MCF 10A (cell line): ENCODE measurements at regions of chr12 and their contacts with region 1.

Region 1: GRCh38 chr12:87428701-87429277 is 600.4 kb downstream of the C12orf50 start:
- DNase-seq: peak; percentile 45
- H3K4me3 Mint-ChIP-seq: no peak overlapping the region
- H3K27ac Mint-ChIP-seq: peak overlapping the region; percentile 88
- H3K4me1 Mint-ChIP-seq: peaks cover 18% of the 10 kb centered on the region
- H3K27me3 Mint-ChIP-seq: no peaks in the 10 kb centered on the region
- CTCF ChIP-seq: no peak

Region 2: DNA sequence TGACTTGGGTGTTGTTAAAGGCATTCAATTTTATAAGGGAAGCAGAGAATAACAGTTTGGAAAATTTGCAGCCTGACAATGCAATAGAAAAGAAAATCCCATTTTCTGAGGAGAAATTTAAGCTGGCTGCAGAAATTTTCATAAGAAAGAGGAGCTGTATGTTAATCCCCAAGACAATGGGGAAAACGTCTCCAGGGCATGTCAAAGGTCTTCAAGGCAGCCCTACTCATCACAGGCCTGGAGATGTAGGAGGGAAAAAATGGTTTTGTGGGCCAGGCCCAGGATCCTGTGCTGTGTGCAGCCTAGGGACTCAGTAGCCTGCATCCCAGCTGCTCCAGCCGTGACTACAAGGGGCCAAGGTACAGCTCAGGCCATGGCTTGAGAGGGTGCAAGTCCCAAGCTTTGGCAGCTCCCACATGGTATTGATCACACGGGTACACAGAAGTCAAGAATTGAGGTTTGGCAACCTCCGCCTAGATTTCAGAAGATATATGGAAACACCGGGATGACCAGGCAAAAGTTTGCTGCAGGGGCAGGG is 246.0 kb before region 1 on chr12:
- CTCF ChIA-PET with region 1: no interaction called
- POLR2A ChIA-PET with region 1: no interaction called
- intact Hi-C with region 1: no loop called
- DNase-seq: no peak
- H3K4me3 Mint-ChIP-seq: no peak overlapping the region
- H3K27ac Mint-ChIP-seq: no peak overlapping the region
- H3K4me1 Mint-ChIP-seq: no peaks in the 10 kb centered on the region
- H3K27me3 Mint-ChIP-seq: no peaks in the 10 kb centered on the region
- CTCF ChIP-seq: no peak

Region 3: GRCh38 chr12:87311206-87311605 is 117.6 kb before region 1 on chr12:
- CTCF ChIA-PET with region 1: no interaction called
- POLR2A ChIA-PET with region 1: no interaction called
- intact Hi-C with region 1: no loop called
- DNase-seq: no peak
- H3K4me3 Mint-ChIP-seq: no peak overlapping the region
- H3K27ac Mint-ChIP-seq: no peak overlapping the region
- H3K4me1 Mint-ChIP-seq: no peaks in the 10 kb centered on the region
- H3K27me3 Mint-ChIP-seq: no peaks in the 10 kb centered on the region
- CTCF ChIP-seq: no peak

Region 4: GRCh38 chr12:87439990-87440827 is 11.4 kb after region 1 on chr12:
- CTCF ChIA-PET with region 1: no interaction called
- POLR2A ChIA-PET with region 1: interaction called, 14 read pairs
- intact Hi-C with region 1: no loop called
- DNase-seq: peak; percentile 88
- H3K4me3 Mint-ChIP-seq: no peak overlapping the region
- H3K27ac Mint-ChIP-seq: peak overlapping the region; percentile 43
- H3K4me1 Mint-ChIP-seq: peaks cover 28% of the 10 kb centered on the region
- H3K27me3 Mint-ChIP-seq: no peaks in the 10 kb centered on the region
- CTCF ChIP-seq: no peak

Region 5: GRCh38 chr12:87848248-87848868 is 419.6 kb after region 1 on chr12:
- CTCF ChIA-PET with region 1: no interaction called
- POLR2A ChIA-PET with region 1: no interaction called
- intact Hi-C with region 1: no loop called
- DNase-seq: peak; percentile 70
- H3K4me3 Mint-ChIP-seq: no peak overlapping the region
- H3K27ac Mint-ChIP-seq: peak overlapping the region; percentile 8
- H3K4me1 Mint-ChIP-seq: peaks cover 12% of the 10 kb centered on the region
- H3K27me3 Mint-ChIP-seq: no peaks in the 10 kb centered on the region
- CTCF ChIP-seq: peak; percentile 75